Naive thymus-derived CD4-positive, alpha-beta T cell (primary cell): ENCODE measurements at regions of chr4 and their contacts with region 1.

Region 1: GRCh38 chr4:90757534-90758060 is 630.4 kb downstream of the CCSER1 start:
- DNase-seq: no peak
- ATAC-seq: no peak
- H3K4me3 ChIP-seq: no peak overlapping the region
- H3K4me3 Mint-ChIP-seq: no peak overlapping the region
- H3K27ac ChIP-seq: no peak overlapping the region
- H3K27ac Mint-ChIP-seq: no peak overlapping the region
- H3K4me1 ChIP-seq: no peaks in the 10 kb centered on the region
- H3K4me1 Mint-ChIP-seq: no peaks in the 10 kb centered on the region
- H3K27me3 ChIP-seq: no peaks in the 10 kb centered on the region
- H3K27me3 Mint-ChIP-seq: no peaks in the 10 kb centered on the region

Region 2: DNA sequence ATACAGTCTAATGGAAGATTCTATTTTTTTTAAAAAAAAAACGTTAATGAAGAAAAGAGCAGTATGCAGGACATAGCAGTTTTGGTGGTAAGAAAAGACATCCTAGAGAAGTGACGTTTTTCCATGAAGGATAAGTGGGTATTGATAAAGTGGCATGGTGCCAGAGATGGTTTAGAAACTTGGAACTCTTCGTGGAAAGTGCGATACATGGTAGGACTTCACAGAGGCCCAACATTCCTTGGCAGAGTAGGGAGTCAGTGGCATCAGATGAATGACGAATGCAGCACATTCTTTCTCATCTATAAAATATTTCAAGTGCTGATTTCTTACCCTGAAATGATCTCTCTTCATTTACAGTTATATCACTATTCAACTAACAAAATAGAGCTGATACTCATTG is 331.7 kb before region 1 on chr4:
- CTCF ChIA-PET with region 1: no interaction called
- POLR2A ChIA-PET with region 1: no interaction called
- intact Hi-C with region 1: no loop called
- DNase-seq: no peak
- ATAC-seq: no peak
- H3K4me3 ChIP-seq: no peak overlapping the region
- H3K4me3 Mint-ChIP-seq: no peak overlapping the region
- H3K27ac ChIP-seq: no peak overlapping the region
- H3K27ac Mint-ChIP-seq: no peak overlapping the region
- H3K4me1 ChIP-seq: no peaks in the 10 kb centered on the region
- H3K4me1 Mint-ChIP-seq: no peaks in the 10 kb centered on the region
- H3K27me3 ChIP-seq: no peaks in the 10 kb centered on the region
- H3K27me3 Mint-ChIP-seq: no peaks in the 10 kb centered on the region

Region 3: DNA sequence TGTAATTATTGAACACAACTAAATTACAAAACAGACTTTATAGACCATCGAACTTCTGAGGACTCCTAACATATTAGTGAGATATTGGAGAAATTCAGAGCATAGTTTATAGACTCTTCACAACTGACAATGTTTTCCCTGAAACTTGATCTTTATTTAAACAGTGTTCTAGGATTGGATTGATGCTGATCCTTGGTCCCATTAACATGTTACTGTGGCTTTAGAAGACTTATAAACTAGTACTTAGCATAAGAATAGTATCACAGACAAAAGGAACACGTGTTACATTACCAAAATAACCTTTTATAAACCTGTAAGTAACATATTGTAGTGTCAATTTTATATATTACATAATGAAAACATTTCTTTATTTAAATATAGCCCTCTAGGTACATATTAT is 59.2 kb after region 1 on chr4:
- CTCF ChIA-PET with region 1: no interaction called
- POLR2A ChIA-PET with region 1: no interaction called
- intact Hi-C with region 1: loop called in 1 of 2 experiments (anchors 10 kb)
- DNase-seq: no peak
- ATAC-seq: no peak
- H3K4me3 ChIP-seq: no peak overlapping the region
- H3K4me3 Mint-ChIP-seq: no peak overlapping the region
- H3K27ac ChIP-seq: no peak overlapping the region
- H3K27ac Mint-ChIP-seq: no peak overlapping the region
- H3K4me1 ChIP-seq: no peaks in the 10 kb centered on the region
- H3K4me1 Mint-ChIP-seq: no peaks in the 10 kb centered on the region
- H3K27me3 ChIP-seq: no peaks in the 10 kb centered on the region
- H3K27me3 Mint-ChIP-seq: no peaks in the 10 kb centered on the region